ENCODE measurements at regions of chr4 and their contacts with region 1.

Region 1: GRCh38 chr4:150178161-150178560 is 99.9 kb downstream of the DCLK2 start:
- DNase-seq: no peak
- H3K4me3 ChIP-seq: no peak overlapping the region
- H3K27me3 ChIP-seq: no peaks in the 10 kb centered on the region
- CTCF ChIP-seq: no peak

Region 2: GRCh38 chr4:150078637-150079581 is 99.3 kb before region 1 on chr4:
- CTCF ChIA-PET with region 1: no interaction called
- POLR2A ChIA-PET with region 1: interaction called, 13 read pairs
- DNase-seq: no peak
- H3K4me3 ChIP-seq: peak overlapping the region; percentile 97
- H3K27me3 ChIP-seq: no peaks in the 10 kb centered on the region
- CTCF ChIP-seq: no peak; the same call in 1 of the 2 replicates

Measured in BJ (cell line).